ENCODE measurements at regions of chr9 and their contacts with region 1.

Region 1: GRCh38 chr9:113446323-113446740 is 17.2 kb upstream of the RGS3 start:
- DNase-seq: no peak
- ATAC-seq: peak; percentile 61 to 78
- H3K4me3 ChIP-seq: no peak overlapping the region
- H3K27ac ChIP-seq: peak overlapping the region; percentile 83
- H3K4me1 ChIP-seq: peaks cover 2% of the 10 kb centered on the region
- H3K27me3 ChIP-seq: no peaks in the 10 kb centered on the region

Region 2: GRCh38 chr9:113591001-113591898 is 144.9 kb after region 1 on chr9:
- intact Hi-C with region 1: loop called (anchors 2 to 5 kb)
- DNase-seq: peak; percentile 77 to 93 (median 92)
- ATAC-seq: peak; percentile 5 to 6
- H3K4me3 ChIP-seq: no peak overlapping the region
- H3K27ac ChIP-seq: peak overlapping the region; percentile 53
- H3K4me1 ChIP-seq: peaks cover 20% of the 10 kb centered on the region
- H3K27me3 ChIP-seq: no peaks in the 10 kb centered on the region

Measured in right cardiac atrium (tissue), 5 donors.